ENCODE measurements at regions of chr7 and their contacts with region 1.

Region 1: DNA sequence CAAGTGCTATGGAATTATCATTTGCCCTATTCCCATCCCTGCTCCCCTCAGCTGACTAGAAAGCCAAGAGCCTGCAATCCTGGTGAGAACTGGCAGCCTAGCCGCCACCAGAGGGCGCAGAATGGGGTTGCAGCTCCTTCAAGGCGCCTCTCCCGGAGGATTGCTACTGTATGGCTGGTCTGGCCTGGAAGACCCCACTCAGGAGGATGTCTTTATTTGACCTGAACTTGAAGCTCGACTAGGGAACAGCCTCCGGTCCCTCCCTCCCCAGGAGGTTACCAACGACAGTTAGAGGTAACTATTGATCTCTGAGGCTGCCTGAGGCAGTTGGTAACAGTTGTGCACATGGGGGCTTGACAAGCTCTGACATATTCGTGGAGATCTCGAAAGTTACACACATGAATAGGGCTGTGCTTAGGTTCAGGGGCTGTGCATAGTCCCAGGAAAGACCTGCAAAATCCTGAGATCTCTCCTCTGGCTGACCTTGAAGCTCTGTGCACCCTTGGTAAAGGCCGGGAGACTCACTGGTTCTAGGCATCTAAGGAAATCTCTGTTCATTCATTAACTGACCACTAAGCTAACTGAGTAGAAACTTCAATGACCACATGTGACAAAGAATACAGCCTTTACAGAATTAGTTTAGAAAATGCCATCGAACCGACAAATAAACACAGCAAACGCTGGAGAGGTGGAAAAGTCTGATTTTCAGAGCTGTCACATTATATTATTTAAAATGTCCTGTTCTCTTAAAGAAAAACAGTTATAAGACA is 65.7 kb downstream of the TSPAN12 start:
- DNase-seq: peak; percentile 24
- ATAC-seq: peak; percentile 96
- H3K4me3 ChIP-seq: no peak overlapping the region
- H3K27ac ChIP-seq: no peak overlapping the region
- H3K4me1 ChIP-seq: no peaks in the 10 kb centered on the region
- H3K27me3 ChIP-seq: no peaks in the 10 kb centered on the region
- CTCF ChIP-seq: peak; percentile 84 to 97 (median 95)
- EP300 ChIP-seq: no peak
- POLR2A ChIP-seq: no peak
- RAD21 ChIP-seq: peak; percentile 70

Region 2: GRCh38 chr7:120760050-120760449 is 32.2 kb before region 1 on chr7:
- CTCF ChIA-PET with region 1: interaction called, 6 read pairs
- POLR2A ChIA-PET with region 1: no interaction called
- RAD21 ChIA-PET with region 1: interaction called, 5 read pairs
- SMC1A ChIA-PET with region 1: interaction called, 13 read pairs
- in situ Hi-C with region 1: no loop called
- intact Hi-C with region 1: no loop called
- DNase-seq: peak; percentile 21
- ATAC-seq: peak; percentile 92
- H3K4me3 ChIP-seq: no peak overlapping the region
- H3K27ac ChIP-seq: no peak overlapping the region
- H3K4me1 ChIP-seq: no peaks in the 10 kb centered on the region
- H3K27me3 ChIP-seq: no peaks in the 10 kb centered on the region
- CTCF ChIP-seq: no peak
- EP300 ChIP-seq: peak; percentile 60 to 84; a peak in 3 of 4 replicates
- POLR2A ChIP-seq: no peak
- RAD21 ChIP-seq: no peak

Region 3: DNA sequence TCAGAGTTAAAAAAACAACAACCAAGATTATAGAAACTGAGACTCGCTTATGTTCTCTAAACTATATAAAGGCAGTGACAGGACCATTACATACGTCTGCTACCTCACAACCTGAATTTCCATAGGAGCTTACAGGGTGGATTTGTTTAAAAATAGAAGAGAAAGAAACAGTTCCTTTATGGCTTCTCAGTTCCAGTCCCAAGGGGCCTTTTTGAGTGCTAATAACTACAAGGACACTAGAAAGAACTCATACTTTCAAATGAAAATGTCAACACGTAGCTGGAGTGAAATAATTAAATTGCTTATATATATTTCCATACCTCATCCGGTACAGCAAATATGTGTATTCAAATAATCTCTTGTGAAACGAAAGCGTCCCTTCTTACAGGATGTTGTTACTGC is 46.0 kb after region 1 on chr7:
- CTCF ChIA-PET with region 1: interaction called, 14 read pairs
- POLR2A ChIA-PET with region 1: interaction called, 6 read pairs
- RAD21 ChIA-PET with region 1: interaction called, 11 read pairs
- SMC1A ChIA-PET with region 1: interaction called, 6 read pairs
- in situ Hi-C with region 1: no loop called
- intact Hi-C with region 1: no loop called
- DNase-seq: peak; percentile 68
- ATAC-seq: peak; percentile 76
- H3K4me3 ChIP-seq: no peak overlapping the region
- H3K27ac ChIP-seq: peak overlapping the region; percentile 39
- H3K4me1 ChIP-seq: peaks cover 7% of the 10 kb centered on the region; the same call in 1 of the 2 replicates
- H3K27me3 ChIP-seq: no peaks in the 10 kb centered on the region
- CTCF ChIP-seq: no peak
- EP300 ChIP-seq: peak; percentile 55 to 56; a peak in 3 of 4 replicates
- POLR2A ChIP-seq: no peak
- RAD21 ChIP-seq: no peak

Region 4: GRCh38 chr7:120898715-120899499 is 106.6 kb after region 1 on chr7:
- CTCF ChIA-PET with region 1: interaction called, 13 read pairs
- POLR2A ChIA-PET with region 1: no interaction called
- RAD21 ChIA-PET with region 1: no interaction called
- SMC1A ChIA-PET with region 1: interaction called, 3 read pairs
- in situ Hi-C with region 1: no loop called
- intact Hi-C with region 1: no loop called
- DNase-seq: no peak
- ATAC-seq: peak; percentile 95
- H3K4me3 ChIP-seq: no peak overlapping the region
- H3K27ac ChIP-seq: no peak overlapping the region
- H3K4me1 ChIP-seq: no peaks in the 10 kb centered on the region
- H3K27me3 ChIP-seq: no peaks in the 10 kb centered on the region
- CTCF ChIP-seq: no peak; a peak in 1 of 6 replicates
- EP300 ChIP-seq: no peak; a peak in 1 of 4 replicates
- POLR2A ChIP-seq: no peak
- RAD21 ChIP-seq: no peak

Region 5: GRCh38 chr7:120941064-120941463 is 148.8 kb after region 1 on chr7:
- CTCF ChIA-PET with region 1: interaction called, 78 read pairs
- POLR2A ChIA-PET with region 1: no interaction called
- RAD21 ChIA-PET with region 1: interaction called, 18 read pairs
- SMC1A ChIA-PET with region 1: interaction called, 26 read pairs
- in situ Hi-C with region 1: loop called (anchors 5 kb)
- intact Hi-C with region 1: loop called (anchors 1 kb)
- DNase-seq: no peak
- ATAC-seq: peak; percentile 84
- H3K4me3 ChIP-seq: no peak overlapping the region
- H3K27ac ChIP-seq: no peak overlapping the region
- H3K4me1 ChIP-seq: no peaks in the 10 kb centered on the region
- H3K27me3 ChIP-seq: no peaks in the 10 kb centered on the region
- CTCF ChIP-seq: peak in 2 of 3 experiments; percentile 23 to 50; a peak in 2 of 6 replicates
- EP300 ChIP-seq: no peak
- POLR2A ChIP-seq: no peak
- RAD21 ChIP-seq: peak; percentile 48

Region 6: GRCh38 chr7:120987683-120988590 is 195.7 kb after region 1 on chr7:
- CTCF ChIA-PET with region 1: interaction called, 17 read pairs
- POLR2A ChIA-PET with region 1: no interaction called
- RAD21 ChIA-PET with region 1: interaction called, 3 read pairs
- SMC1A ChIA-PET with region 1: interaction called, 6 read pairs
- in situ Hi-C with region 1: no loop called
- intact Hi-C with region 1: no loop called
- DNase-seq: peak; percentile 47
- ATAC-seq: peak; percentile 97
- H3K4me3 ChIP-seq: peak overlapping the region; percentile 45; the same call in 1 of the 2 replicates
- H3K27ac ChIP-seq: no peak overlapping the region
- H3K4me1 ChIP-seq: peaks cover 21% of the 10 kb centered on the region
- H3K27me3 ChIP-seq: peaks cover 0 to 15% of the 10 kb centered on the region in 2 experiments
- CTCF ChIP-seq: peak; percentile 89 to 98 (median 95)
- EP300 ChIP-seq: no peak
- POLR2A ChIP-seq: no peak
- RAD21 ChIP-seq: peak; percentile 90

Region 7: GRCh38 chr7:121689749-121690148 is 897.5 kb after region 1 on chr7:
- CTCF ChIA-PET with region 1: no interaction called
- POLR2A ChIA-PET with region 1: no interaction called
- RAD21 ChIA-PET with region 1: no interaction called
- SMC1A ChIA-PET with region 1: no interaction called
- in situ Hi-C with region 1: no loop called
- intact Hi-C with region 1: no loop called
- DNase-seq: no peak
- ATAC-seq: no peak
- H3K4me3 ChIP-seq: no peak overlapping the region
- H3K27ac ChIP-seq: no peak overlapping the region
- H3K4me1 ChIP-seq: no peaks in the 10 kb centered on the region
- H3K27me3 ChIP-seq: no peaks in the 10 kb centered on the region
- CTCF ChIP-seq: no peak
- EP300 ChIP-seq: no peak
- POLR2A ChIP-seq: no peak
- RAD21 ChIP-seq: no peak

Region 8: DNA sequence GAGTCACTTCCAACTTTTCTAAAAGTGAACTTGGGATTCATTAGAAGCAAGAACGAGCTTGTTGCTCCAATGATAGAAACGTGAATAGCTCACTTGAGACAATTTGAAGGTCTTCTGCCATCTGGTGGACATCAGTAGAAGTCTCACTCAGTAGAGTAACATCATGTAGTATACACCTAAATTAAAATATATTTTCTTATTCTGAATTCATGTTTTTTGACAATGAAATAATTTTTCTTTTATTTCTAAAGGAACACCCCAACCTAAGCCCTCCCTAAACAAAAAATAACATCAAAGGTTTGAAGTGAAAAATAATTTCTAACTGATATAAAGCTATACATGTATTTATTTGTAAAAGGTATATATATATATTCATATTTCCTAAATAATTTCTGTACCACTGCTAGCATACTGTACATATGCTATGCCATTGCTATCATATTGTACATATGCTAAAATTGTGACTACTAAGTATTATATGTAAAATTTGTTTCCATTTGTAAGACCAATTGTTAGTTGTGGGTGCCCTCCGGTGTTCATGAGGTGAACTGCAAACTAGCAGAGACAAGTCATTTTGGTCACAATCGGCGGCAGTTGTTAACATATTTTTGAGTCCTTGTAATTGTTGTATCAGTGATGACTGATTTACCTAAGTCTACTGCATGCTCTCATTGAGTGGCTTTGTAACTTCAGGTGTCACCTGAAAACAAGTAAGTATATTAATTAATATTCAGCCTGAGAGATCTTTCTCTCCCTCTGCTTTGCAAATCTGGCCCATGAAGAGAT is 1202.5 kb after region 1 on chr7:
- CTCF ChIA-PET with region 1: no interaction called
- POLR2A ChIA-PET with region 1: no interaction called
- RAD21 ChIA-PET with region 1: no interaction called
- SMC1A ChIA-PET with region 1: no interaction called
- in situ Hi-C with region 1: loop called (anchors 25 kb)
- intact Hi-C with region 1: no loop called
- DNase-seq: no peak
- ATAC-seq: peak; percentile 98
- H3K4me3 ChIP-seq: no peak overlapping the region
- H3K27ac ChIP-seq: no peak overlapping the region
- H3K4me1 ChIP-seq: no peaks in the 10 kb centered on the region
- H3K27me3 ChIP-seq: no peaks in the 10 kb centered on the region
- CTCF ChIP-seq: peak; percentile 69 to 84 (median 73)
- EP300 ChIP-seq: no peak
- POLR2A ChIP-seq: no peak
- RAD21 ChIP-seq: peak; percentile 88